Mammary epithelial cell (primary cell): ENCODE measurements at regions of chr5 and their contacts with region 1.

Region 1: DNA sequence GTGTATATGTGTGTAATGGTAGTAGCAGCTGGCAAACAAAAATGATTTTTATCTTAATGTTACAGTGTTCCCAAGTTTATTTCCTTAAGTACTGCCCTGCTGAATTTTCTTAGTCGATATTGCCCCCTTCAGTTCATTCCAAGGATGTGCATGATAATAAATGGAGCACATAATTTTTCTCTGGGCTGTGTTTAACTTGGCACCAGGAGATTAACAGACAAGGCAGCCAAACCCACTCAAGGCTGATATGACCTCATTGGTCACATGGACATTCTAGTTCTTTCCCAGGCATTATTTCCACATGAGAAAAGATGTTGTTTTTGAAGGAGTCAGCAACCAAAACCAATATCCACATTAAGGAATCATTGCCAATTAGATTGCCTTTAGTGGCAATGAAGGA is 61.8 kb downstream of the COX7C start:
- DNase-seq: peak; percentile 44
- H3K4me3 ChIP-seq: no peak overlapping the region
- H3K27ac ChIP-seq: no peak overlapping the region
- H3K4me1 ChIP-seq: no peaks in the 10 kb centered on the region
- H3K27me3 ChIP-seq: peaks cover 2% of the 10 kb centered on the region
- CTCF ChIP-seq: peak; percentile 57 to 71

Region 2: GRCh38 chr5:86354664-86355063 is 324.9 kb before region 1 on chr5:
- CTCF ChIA-PET with region 1: no interaction called
- dilution Hi-C with region 1: no loop called
- in situ Hi-C with region 1: no loop called
- intact Hi-C with region 1: no loop called
- DNase-seq: no peak
- H3K4me3 ChIP-seq: no peak overlapping the region
- H3K27ac ChIP-seq: no peak overlapping the region
- H3K4me1 ChIP-seq: no peaks in the 10 kb centered on the region
- H3K27me3 ChIP-seq: peaks cover 2% of the 10 kb centered on the region
- CTCF ChIP-seq: no peak

Region 3: GRCh38 chr5:86565197-86565789 is 114.2 kb before region 1 on chr5:
- CTCF ChIA-PET with region 1: no interaction called
- dilution Hi-C with region 1: no loop called
- in situ Hi-C with region 1: no loop called
- intact Hi-C with region 1: loop called (anchors 2 kb)
- DNase-seq: no peak
- H3K4me3 ChIP-seq: no peak overlapping the region
- H3K27ac ChIP-seq: no peak overlapping the region
- H3K4me1 ChIP-seq: no peaks in the 10 kb centered on the region
- H3K27me3 ChIP-seq: peaks cover 2% of the 10 kb centered on the region
- CTCF ChIP-seq: no peak